ENCODE measurements at regions of chr7 and their contacts with region 1.

Region 1: DNA sequence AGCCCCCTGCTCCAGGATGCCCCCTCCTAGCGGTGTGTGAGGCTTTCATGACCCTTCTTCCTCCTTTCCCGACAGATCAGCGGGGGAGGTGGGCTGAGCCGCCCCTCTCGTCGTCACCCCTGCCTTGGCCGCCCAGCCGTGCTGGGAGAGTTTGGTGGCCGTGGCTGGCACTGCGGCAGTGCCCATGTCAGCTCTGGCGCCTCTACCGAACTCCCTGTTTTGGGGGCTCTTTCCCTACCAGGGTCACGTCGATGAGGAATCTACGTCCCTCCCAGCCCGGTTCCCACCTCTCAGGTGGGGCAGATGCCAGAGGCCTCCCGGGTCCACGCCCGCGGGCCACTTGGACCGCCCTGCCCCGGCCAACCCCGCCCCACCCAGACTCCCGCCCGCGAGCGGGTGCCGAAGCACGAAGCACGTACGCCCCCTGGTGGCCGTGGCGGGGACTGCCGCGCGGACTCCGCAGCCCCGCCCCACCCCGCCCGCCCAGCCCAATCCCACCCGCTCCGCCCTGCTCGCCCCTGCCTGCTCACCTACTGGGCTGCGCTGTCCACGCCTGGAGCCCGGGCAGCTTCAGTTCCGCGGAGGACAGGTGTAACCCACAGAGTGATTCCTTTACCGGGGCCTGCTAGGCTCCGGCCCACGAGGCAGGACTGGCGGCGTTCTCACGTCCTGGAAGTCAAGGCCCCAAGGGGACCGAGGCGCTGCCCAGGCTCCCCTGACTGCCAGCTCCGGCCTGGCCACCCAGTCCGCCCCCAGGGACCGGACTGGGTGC is 127.1 kb downstream of the UBE2H start:
- DNase-seq: peak; percentile 83
- H3K4me3 Mint-ChIP-seq: peak overlapping the region; percentile 89
- H3K27ac Mint-ChIP-seq: peak overlapping the region; percentile 67
- H3K4me1 Mint-ChIP-seq: peaks cover 14% of the 10 kb centered on the region
- H3K27me3 Mint-ChIP-seq: no peaks in the 10 kb centered on the region

Region 2: DNA sequence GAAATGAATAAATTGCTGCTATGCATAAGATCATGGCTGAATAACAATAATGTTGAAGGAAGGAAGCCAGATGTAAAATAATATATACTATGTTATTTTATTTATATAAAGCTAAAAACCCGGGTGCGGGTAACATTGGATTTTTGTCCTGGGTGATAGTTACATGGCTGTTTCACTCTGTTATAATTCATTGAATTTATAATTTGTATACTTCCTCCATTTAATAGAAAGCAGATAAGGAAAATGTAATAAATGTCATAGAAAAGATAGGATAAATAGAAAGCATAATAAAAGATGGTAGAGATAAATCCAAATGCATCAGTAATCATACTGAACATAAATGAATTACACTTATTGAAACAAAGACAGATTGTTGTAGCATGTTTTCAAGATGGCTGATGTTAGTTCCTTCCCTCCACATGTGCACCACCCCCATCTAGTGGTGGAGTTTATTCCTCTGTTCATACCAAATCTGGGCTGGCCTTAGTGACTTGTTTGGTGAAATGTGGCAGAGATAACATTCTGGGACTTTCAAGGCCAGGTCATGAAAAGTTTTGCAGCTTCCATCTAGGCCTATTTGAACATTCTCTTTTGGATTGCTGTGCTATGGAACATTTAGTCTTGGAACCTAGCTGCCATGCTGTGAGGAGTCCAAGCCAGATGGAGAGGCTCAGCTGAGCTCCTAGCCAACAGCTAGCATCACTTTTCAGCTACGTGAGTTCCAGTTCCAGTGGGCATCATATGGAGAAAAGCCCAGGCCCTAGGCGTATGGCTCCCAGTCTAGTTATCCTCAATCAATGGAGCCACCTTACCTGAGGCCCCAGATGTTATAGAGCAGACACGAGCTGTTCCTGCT is 554.0 kb before region 1 on chr7:
- intact Hi-C with region 1: loop called (anchors 5 kb)
- DNase-seq: peak; percentile 58
- H3K4me3 Mint-ChIP-seq: no peak overlapping the region
- H3K27ac Mint-ChIP-seq: no peak overlapping the region
- H3K4me1 Mint-ChIP-seq: peaks cover 9% of the 10 kb centered on the region
- H3K27me3 Mint-ChIP-seq: no peaks in the 10 kb centered on the region

Region 3: GRCh38 chr7:129611246-129612111 is 214.2 kb before region 1 on chr7 and contains the start of gene NRF1:
- intact Hi-C with region 1: loop called (anchors 1 kb)
- DNase-seq: peak; percentile 89
- H3K4me3 Mint-ChIP-seq: peak within 1 kb of the TSS; percentile 98
- H3K27ac Mint-ChIP-seq: peak within 1 kb of the TSS; percentile 99
- H3K4me1 Mint-ChIP-seq: peaks cover 48% of the 10 kb centered on the region
- H3K27me3 Mint-ChIP-seq: no peaks in the 10 kb centered on the region
- total RNA-seq, gene NRF1: 22.8 and 25.9 TPM in 2 replicates

Region 4: GRCh38 chr7:129780257-129780973 is 45.3 kb before region 1 on chr7:
- intact Hi-C with region 1: loop called (anchors 1 kb)
- DNase-seq: peak; percentile 48
- H3K4me3 Mint-ChIP-seq: peak overlapping the region; percentile 63
- H3K27ac Mint-ChIP-seq: no peak overlapping the region
- H3K4me1 Mint-ChIP-seq: peaks cover 23% of the 10 kb centered on the region
- H3K27me3 Mint-ChIP-seq: peaks cover 67% of the 10 kb centered on the region

Region 5: DNA sequence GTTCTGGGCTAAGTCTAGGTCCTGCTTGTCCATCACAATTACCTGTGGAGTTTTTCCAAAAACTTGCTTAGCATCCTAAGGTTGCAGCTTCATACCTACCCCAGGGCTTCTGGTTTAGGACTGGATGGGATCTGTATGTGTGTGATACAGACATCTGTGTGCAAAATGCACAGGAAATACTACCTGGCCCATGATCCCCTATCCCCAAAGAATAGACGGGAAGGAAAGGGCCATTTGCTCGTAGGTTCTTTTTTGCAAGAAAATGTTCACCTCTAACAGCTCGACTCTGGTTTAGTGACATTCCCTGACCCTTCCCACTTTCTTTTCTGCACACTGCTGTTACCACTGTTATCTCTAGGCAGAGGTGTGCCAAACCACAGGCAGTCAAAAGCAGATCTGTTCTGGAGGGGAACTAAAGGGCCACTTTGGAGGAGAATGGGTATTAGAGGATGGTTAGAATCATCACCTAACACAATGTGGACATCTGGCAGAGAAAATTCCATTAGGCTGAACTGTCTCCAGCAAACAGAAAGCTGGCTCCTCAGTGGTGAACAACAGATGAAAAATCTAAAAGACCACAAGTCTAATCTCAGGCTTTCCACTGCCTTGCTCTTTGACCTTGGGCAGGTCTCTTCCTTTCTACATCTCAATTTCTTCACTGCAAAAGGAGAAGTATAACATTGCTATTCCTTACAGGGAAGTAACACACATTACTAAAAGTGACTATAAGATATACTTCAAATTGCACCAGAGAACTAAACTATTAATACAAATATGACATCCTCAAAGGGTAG is 19.7 kb after region 1 on chr7:
- intact Hi-C with region 1: no loop called
- DNase-seq: no peak
- H3K4me3 Mint-ChIP-seq: no peak overlapping the region
- H3K27ac Mint-ChIP-seq: no peak overlapping the region
- H3K4me1 Mint-ChIP-seq: peaks cover 33% of the 10 kb centered on the region
- H3K27me3 Mint-ChIP-seq: no peaks in the 10 kb centered on the region

Region 6: GRCh38 chr7:130444234-130444633 is 618.6 kb after region 1 on chr7:
- intact Hi-C with region 1: no loop called
- DNase-seq: no peak
- H3K4me3 Mint-ChIP-seq: no peak overlapping the region
- H3K27ac Mint-ChIP-seq: no peak overlapping the region
- H3K4me1 Mint-ChIP-seq: peaks cover 40% of the 10 kb centered on the region
- H3K27me3 Mint-ChIP-seq: no peaks in the 10 kb centered on the region

Measured in activated T-helper 1 cell treated with anti-CD3 and anti-CD28 coated beads, Interleukin-12 subunit alpha, Interleukin-12 subunit beta, Interleukin-2, Interleukin-4 antibody, amounts not matched to agents 30 ng/mL and 10 ng/mL and 1 ng/mL, durations not matched to agents 14 hours and 24 hours and 36 hours (primary cell).